Psoas muscle (tissue), 8 donors: ENCODE measurements at regions of chr19 and their contacts with region 1.

Region 1: DNA sequence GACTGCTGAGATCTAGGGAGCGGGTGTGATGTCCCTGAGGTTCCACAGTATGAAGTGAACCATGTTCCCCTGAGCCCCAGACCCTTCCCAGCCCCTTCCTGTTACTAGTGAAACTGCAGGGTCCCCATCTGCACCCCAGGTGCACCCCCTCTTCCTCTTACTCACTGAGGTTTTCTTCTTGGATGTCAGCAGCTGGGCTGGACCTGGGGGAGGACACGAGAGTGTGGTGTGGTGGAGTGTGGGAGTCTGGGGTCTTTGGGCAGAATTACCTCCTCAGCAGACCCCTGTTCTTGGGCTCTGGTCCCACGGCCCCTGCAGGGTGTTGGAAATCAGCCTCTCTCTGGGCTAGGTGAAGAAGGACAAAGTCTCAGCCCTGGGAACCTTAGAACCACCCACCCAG is 3.3 kb upstream of the LILRA6 start:
- DNase-seq: no peak
- ATAC-seq: no peak
- H3K4me3 ChIP-seq: no peak overlapping the region
- H3K27ac ChIP-seq: no peak overlapping the region
- H3K4me1 ChIP-seq: no peaks in the 10 kb centered on the region
- H3K27me3 ChIP-seq: no peaks in the 10 kb centered on the region
- CTCF ChIP-seq: no peak

Region 2: GRCh38 chr19:54218960-54219661 is 26.8 kb before region 1 on chr19:
- intact Hi-C with region 1: loop called (anchors 2 kb)
- DNase-seq: no peak
- ATAC-seq: no peak
- H3K4me3 ChIP-seq: no peak overlapping the region
- H3K27ac ChIP-seq: no peak overlapping the region
- H3K4me1 ChIP-seq: no peaks in the 10 kb centered on the region
- H3K27me3 ChIP-seq: no peaks in the 10 kb centered on the region
- CTCF ChIP-seq: no peak

Region 3: DNA sequence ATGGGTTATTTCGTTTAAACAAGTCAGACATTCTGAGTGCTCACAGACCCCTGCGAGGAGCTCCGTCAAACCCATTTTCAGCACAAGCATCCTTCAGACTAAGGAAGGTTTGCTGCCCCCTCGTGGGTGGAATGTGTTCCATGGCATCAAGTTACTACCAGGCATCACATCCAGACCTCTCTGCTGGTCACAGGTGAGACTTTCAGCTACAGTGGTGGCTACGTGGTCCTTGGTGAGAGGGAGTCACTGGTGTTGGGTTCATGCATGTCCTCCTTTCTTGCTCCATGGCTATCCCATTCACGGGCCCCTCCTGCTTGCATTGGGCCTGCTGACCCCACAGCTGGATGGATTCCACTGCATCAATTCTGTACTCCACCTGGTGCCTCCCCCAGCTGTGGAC is 20.2 kb after region 1 on chr19:
- intact Hi-C with region 1: no loop called
- DNase-seq: peak in 1 of 2 donors; percentile 56
- ATAC-seq: no peak
- H3K4me3 ChIP-seq: no peak overlapping the region
- H3K27ac ChIP-seq: no peak overlapping the region
- H3K4me1 ChIP-seq: no peaks in the 10 kb centered on the region
- H3K27me3 ChIP-seq: peaks cover 0 to 3% (median 0%) of the 10 kb centered on the region in 3 donors
- CTCF ChIP-seq: peak; percentile 41